ENCODE measurements at regions of chr2 and their contacts with region 1.

Region 1: GRCh38 chr2:46364797-46365457 is 67.7 kb downstream of the EPAS1 start:
- DNase-seq: peak; percentile 12
- H3K4me3 ChIP-seq: no peak overlapping the region
- CTCF ChIP-seq: peak; percentile 54

Region 2: GRCh38 chr2:45483997-45484396 is 880.9 kb before region 1 on chr2:
- CTCF ChIA-PET with region 1: no interaction called
- POLR2A ChIA-PET with region 1: no interaction called
- DNase-seq: no peak
- H3K4me3 ChIP-seq: no peak overlapping the region
- CTCF ChIP-seq: peak; percentile 15

Region 3: GRCh38 chr2:46002507-46002883 is 362.4 kb before region 1 on chr2:
- CTCF ChIA-PET with region 1: interaction called, 15 read pairs
- POLR2A ChIA-PET with region 1: no interaction called
- DNase-seq: peak; percentile 70
- H3K4me3 ChIP-seq: no peak overlapping the region
- CTCF ChIP-seq: no peak

Region 4: DNA sequence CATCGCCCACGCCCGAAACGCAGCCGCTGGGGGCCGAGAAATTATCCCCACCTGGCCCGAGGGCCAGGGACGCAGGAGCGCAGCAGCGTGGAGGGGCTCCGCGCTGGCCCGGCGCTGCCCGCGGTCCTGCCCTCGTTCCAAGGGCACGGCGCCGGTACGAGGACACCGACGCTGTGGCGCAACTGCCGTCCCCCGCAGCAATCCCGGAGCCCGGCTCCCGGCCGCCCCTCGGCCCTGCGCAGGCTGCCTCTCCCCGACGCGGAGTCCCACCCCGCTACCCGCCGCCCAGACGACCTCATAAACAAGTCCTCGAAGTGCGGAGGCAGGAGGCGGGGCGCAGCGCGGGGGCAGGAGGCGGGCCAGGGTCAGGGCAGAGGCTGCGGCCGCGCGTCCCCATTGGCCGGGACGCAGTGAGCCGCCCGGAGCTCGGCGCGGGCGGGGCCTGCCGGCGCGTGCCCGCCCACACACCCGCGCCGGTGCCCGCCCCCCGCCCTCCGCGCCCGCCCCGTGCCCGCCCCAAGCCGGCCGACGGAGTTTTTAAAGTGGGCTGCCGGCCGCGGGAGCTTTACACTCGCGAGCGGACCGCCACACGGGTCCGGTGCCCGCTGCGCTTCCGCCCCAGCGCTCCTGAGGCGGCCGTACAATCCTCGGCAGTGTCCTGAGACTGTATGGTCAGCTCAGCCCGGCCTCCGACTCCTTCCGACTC is 67.9 kb before region 1 on chr2 and contains the start of gene EPAS1:
- CTCF ChIA-PET with region 1: interaction called, 11 read pairs
- POLR2A ChIA-PET with region 1: interaction called, 7 read pairs
- DNase-seq: no peak
- H3K4me3 ChIP-seq: peak within 1 kb of the TSS; percentile 83
- CTCF ChIP-seq: no peak

Region 5: GRCh38 chr2:46339667-46340459 is 25.1 kb before region 1 on chr2:
- CTCF ChIA-PET with region 1: interaction called, 12 read pairs
- POLR2A ChIA-PET with region 1: no interaction called
- DNase-seq: no peak
- H3K4me3 ChIP-seq: no peak overlapping the region
- CTCF ChIP-seq: no peak

Region 6: GRCh38 chr2:46377176-46377581 is 12.3 kb after region 1 on chr2:
- CTCF ChIA-PET with region 1: interaction called, 29 read pairs
- POLR2A ChIA-PET with region 1: no interaction called
- DNase-seq: no peak
- H3K4me3 ChIP-seq: no peak overlapping the region
- CTCF ChIP-seq: no peak